AG04450 (cell line): ENCODE measurements at regions of chr9 and their contacts with region 1.

Region 1: GRCh38 chr9:5450359-5451091 is at the start of gene CD274:
- DNase-seq: peak; percentile 74
- H3K4me3 ChIP-seq: peak within 1 kb of the TSS; percentile 78
- H3K27ac ChIP-seq: peak within 1 kb of the TSS; percentile 66
- H3K27me3 ChIP-seq: no peaks in the 10 kb centered on the region
- CTCF ChIP-seq: peak; percentile 73
- polyA plus RNA-seq, gene CD274: 16.3 and 16.6 TPM in 2 replicates

Region 2: GRCh38 chr9:5416962-5417361 is 33.6 kb before region 1 on chr9:
- CTCF ChIA-PET with region 1: no interaction called
- POLR2A ChIA-PET with region 1: no interaction called
- DNase-seq: no peak
- H3K4me3 ChIP-seq: no peak overlapping the region
- H3K27ac ChIP-seq: no peak overlapping the region
- H3K27me3 ChIP-seq: no peaks in the 10 kb centered on the region
- CTCF ChIP-seq: no peak

Region 3: DNA sequence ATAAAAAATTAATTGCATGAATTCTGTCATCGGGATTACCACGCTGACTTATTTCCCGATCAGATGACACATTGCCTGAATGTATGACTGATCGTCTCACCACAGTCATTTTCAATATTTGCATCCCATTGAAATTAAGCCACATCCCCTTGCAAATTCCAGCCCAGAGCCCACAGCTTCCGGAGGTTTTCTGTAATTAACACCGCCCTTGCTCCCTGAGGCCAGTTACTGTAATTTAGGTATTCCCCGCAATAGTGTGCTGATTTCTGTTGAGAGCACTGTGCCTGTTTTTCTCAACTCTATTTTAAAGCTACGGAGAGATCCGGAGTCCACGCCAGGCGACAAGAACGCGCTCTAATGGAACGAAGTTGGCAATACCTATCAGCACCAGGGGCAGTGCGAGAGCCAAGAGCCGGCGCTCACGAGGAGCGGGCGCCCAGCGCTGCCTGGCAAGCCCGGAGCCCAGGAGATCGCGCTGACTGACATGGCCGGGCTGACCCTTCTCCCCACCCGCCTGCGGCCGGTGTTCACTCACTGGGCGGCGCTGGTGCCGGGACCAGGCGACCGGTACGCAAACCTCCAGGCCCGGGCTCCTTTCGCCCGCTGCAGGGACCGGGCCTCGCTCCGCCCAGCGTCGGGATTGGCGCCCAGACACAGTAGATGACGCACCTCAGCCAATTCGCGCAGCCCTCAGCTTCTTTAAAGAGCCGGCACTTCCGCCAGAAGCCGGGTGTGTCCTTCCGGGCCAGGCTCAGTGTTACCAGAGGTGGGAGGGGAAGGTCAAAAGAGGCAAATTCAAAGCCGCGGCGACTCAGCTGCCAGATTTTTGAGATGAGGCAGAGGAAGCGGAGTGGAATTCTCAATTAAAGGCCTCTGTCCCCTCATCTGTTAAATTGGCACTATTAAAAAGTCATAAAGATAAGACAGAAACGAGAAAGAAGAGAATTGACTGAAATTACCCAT is 13.0 kb before region 1 on chr9 and contains the start of gene PLGRKT:
- CTCF ChIA-PET with region 1: interaction called, 18 read pairs
- POLR2A ChIA-PET with region 1: interaction called, 11 read pairs
- DNase-seq: peak; percentile 59
- H3K4me3 ChIP-seq: peak within 1 kb of the TSS; percentile 75
- H3K27ac ChIP-seq: peak within 1 kb of the TSS; percentile 73
- H3K27me3 ChIP-seq: no peaks in the 10 kb centered on the region
- CTCF ChIP-seq: peak; percentile 16; the same call in 1 of the 2 replicates
- polyA plus RNA-seq, gene PLGRKT: 8.6 and 13.1 TPM in 2 replicates

Region 4: DNA sequence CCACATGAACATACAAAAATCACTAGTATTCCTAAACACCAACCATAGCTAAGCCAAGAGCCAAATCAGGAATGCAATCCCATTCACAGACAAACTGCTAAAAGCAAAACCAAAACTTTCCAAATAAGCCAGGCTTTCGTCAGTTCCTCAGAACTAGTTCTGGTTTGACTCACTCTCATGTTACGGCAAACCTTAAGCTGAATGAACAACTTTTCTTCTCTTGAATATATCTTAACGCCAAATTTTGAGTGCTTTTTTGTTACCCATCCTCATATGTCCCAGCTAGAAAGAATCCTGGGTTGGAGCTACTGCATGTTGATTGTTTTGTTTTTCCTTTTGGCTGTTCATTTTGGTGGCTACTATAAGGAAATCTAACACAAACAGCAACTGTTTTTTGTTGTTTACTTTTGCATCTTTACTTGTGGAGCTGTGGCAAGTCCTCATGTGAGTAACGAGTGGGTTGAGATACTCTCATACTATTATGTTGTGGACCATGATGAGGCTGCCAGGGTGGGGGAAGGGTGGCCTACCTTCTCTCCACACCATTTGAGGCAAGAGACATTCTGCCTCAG is 59.9 kb after region 1 on chr9 and contains the start of gene PDCD1LG2:
- CTCF ChIA-PET with region 1: interaction called, 13 read pairs
- POLR2A ChIA-PET with region 1: interaction called, 8 read pairs
- DNase-seq: peak; percentile 59
- H3K4me3 ChIP-seq: peak within 1 kb of the TSS; percentile 58
- H3K27ac ChIP-seq: peak within 1 kb of the TSS; percentile 94
- H3K27me3 ChIP-seq: no peaks in the 10 kb centered on the region
- CTCF ChIP-seq: no peak
- polyA plus RNA-seq, gene PDCD1LG2: 31.5 TPM in 2 replicates

Region 5: DNA sequence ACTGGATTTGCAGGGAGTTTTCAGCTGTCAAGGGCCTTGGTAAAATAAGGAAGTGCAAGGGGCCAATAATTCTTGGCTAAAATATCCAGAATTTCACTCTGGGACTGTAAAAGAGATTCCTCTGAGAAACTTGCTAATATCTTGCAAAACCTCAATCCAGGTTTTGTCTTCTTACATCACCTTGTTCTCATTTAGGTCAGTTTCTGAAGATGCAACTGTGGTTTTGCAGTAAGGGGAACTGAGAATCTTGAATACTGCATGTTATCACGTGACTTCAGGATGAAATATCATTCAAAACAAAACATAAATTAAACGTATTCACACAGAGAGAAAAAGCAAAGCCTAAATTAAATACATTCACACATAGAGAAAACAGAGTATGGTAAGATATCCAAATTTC is 143.4 kb after region 1 on chr9:
- CTCF ChIA-PET with region 1: interaction called, 44 read pairs
- POLR2A ChIA-PET with region 1: no interaction called
- DNase-seq: no peak
- H3K4me3 ChIP-seq: no peak overlapping the region
- H3K27ac ChIP-seq: no peak overlapping the region
- H3K27me3 ChIP-seq: no peaks in the 10 kb centered on the region
- CTCF ChIP-seq: no peak